ENCODE measurements at regions of chr19 and their contacts with region 1.

Region 1: DNA sequence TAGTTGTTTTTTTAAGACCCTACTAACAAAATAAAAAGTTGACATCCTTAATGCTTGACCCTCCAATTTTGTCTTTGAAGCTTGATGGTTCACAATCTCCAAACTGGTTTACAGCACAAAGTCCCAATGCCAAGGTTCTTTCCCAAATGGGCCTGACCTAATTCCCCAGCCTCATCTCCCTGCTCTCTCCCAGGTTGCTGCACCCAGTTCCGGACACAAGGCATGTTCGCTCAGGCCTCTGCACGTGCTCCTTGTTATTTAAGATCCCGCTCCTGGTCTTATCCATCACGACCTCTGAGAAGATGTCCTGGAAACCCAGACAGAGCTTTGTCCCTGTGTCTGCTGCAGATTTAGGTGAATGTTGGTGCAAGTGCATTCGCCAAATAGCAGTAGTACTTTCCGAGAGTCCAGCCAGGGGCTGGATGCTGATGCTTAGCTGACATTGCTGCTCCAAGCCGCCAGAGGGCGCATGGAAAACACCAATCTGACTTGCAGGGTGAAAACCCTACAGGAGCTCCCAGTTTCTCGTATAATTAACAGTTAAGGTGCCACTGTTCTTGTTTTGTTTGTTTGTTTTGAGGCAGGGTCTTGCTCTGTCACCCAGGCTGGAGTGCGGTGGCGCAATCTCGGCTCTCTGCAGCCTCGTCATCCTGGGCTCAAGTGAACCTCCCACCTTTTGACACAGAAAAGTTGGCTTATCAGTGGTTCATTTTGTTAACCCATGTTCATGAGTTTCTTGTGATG is 18.5 kb downstream of the LYPD3 start:
- H3K4me3 ChIP-seq: no peak overlapping the region
- H3K27ac ChIP-seq: no peak overlapping the region
- H3K4me1 ChIP-seq: no peaks in the 10 kb centered on the region
- CTCF ChIP-seq: peak; percentile 97

Region 2: DNA sequence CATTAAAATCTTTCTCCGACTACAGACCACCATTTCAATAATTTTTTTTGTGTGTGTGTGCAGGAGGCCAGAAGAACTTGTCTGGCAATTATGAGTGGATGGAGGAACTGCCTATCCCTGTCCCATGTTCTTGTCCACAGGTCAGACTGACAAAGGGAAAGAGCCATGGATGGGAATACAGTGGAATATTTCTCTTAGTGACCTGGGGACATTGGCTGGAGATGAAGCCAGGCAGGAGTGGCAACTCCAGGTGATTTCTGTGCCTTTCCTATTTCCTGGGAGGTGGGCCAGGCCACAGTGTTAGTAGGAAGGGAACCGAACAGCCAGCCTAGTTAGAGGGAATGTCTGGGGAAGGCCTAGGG is 181.3 kb before region 1 on chr19:
- CTCF ChIA-PET with region 1: no interaction called
- POLR2A ChIA-PET with region 1: no interaction called
- H3K4me3 ChIP-seq: no peak overlapping the region
- H3K27ac ChIP-seq: peak overlapping the region; percentile 58
- H3K4me1 ChIP-seq: peaks cover 3% of the 10 kb centered on the region; the same call in 1 of the 2 replicates
- CTCF ChIP-seq: no peak

Region 3: DNA sequence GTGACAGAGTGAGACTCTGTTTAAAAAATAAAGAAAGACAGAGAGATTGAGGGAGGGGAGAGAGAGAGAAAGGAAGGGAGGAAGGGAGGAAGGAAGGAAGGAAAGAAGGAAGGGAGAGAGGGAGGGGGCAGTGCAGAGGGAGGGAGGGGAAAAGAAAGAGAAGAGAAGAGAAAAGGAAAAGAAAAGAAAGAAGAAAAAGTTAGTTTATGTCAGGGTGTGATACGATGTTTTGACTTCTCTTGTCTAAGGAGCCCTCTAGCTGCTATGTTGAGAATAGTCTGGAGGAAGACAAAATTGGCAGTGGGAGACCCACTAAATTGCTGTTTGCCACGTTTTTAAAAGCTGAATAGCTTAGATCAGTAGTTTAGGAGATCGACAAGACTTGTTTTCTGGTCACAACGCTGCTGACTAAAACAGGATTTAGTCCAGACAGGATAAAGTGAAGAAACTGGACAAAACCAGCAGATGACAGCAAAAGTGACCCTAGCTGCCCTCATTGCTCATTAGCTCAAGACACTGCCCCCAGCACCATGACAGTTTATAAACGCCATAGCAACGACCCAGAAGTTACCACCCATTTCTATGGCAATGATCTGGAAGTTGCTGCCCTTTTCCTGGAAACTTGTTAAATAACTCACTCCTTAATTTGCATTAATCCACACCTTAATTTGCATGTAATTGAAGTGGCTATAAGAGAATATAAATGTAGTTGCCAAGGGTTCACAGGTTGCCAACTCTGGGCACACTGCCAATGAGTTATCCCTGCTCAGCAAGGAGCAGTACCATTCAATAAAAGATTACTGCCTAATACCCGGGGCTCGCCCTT is 21.1 kb before region 1 on chr19:
- CTCF ChIA-PET with region 1: interaction called, 176 read pairs
- POLR2A ChIA-PET with region 1: interaction called, 9 read pairs
- H3K4me3 ChIP-seq: no peak overlapping the region
- H3K27ac ChIP-seq: no peak overlapping the region
- H3K4me1 ChIP-seq: peaks cover 12% of the 10 kb centered on the region
- CTCF ChIP-seq: peak; percentile 91

Region 4: DNA sequence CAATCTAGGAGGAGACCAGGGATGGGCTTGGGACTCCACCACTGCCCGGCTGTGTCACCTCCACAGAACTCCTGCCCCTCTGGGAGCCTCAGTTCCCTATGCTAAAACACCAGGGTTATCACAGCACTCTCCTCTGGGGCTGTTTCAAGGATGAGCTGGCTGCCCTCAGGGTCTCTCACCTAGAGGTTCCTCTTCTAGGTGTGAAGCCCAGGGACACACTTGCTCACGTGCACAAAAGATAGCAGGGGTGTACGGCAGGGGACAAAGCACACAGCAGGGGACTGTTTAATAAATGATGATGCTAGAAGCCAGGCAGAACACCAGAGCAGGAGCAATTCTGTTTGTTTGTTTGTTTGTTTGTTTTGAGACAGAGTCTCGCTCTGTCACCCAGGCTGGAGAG is 35.3 kb after region 1 on chr19:
- CTCF ChIA-PET with region 1: interaction called, 24 read pairs
- POLR2A ChIA-PET with region 1: no interaction called
- H3K4me3 ChIP-seq: no peak overlapping the region
- H3K27ac ChIP-seq: no peak overlapping the region
- H3K4me1 ChIP-seq: no peaks in the 10 kb centered on the region
- CTCF ChIP-seq: no peak

Region 5: GRCh38 chr19:43526884-43527859 is 80.3 kb after region 1 on chr19 and contains the start of gene ETHE1:
- CTCF ChIA-PET with region 1: interaction called, 749 read pairs
- POLR2A ChIA-PET with region 1: interaction called, 5 read pairs
- H3K4me3 ChIP-seq: peak within 1 kb of the TSS; percentile 60
- H3K27ac ChIP-seq: peak within 1 kb of the TSS; percentile 64; the same call in 1 of the 2 replicates
- H3K4me1 ChIP-seq: peaks cover 30% of the 10 kb centered on the region
- CTCF ChIP-seq: peak; percentile 79

Region 6: DNA sequence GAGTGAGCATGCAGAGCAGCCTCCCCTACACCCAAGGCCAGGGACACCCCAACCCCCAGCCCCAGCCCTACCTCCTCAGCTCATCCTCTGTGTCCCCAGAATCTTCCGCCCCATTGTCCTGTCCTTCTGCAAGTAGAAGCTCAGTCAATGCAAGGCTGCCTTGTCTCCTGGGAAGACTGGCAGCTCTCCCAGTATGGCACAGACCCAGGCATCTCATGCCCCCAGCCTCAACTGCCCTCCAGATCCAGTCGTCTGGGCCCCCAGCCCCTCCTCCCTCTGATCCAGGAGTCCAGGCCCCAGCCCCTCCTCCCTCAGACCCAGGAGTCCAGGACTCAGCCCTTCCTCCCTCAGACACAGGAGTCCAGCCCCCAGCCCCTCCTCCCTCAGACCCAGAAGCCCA is 99.1 kb after region 1 on chr19:
- CTCF ChIA-PET with region 1: no interaction called
- POLR2A ChIA-PET with region 1: no interaction called
- H3K4me3 ChIP-seq: no peak overlapping the region
- H3K27ac ChIP-seq: no peak overlapping the region
- H3K4me1 ChIP-seq: no peaks in the 10 kb centered on the region
- CTCF ChIP-seq: no peak

Region 7: GRCh38 chr19:43564800-43565199 is 117.9 kb after region 1 on chr19:
- CTCF ChIA-PET with region 1: interaction called, 14 read pairs
- POLR2A ChIA-PET with region 1: no interaction called
- H3K4me3 ChIP-seq: no peak overlapping the region
- H3K27ac ChIP-seq: no peak overlapping the region
- H3K4me1 ChIP-seq: peaks cover 2% of the 10 kb centered on the region; the same call in 1 of the 2 replicates
- CTCF ChIP-seq: no peak

Measured in HEK293 (cell line).